ENCODE measurements at regions of chr17 and their contacts with region 1.

Region 1: GRCh38 chr17:78865682-78866390 is 25.2 kb upstream of the USP36 start:
- DNase-seq: peak; percentile 88
- ATAC-seq: peak; percentile 96
- H3K4me3 Mint-ChIP-seq: no peak overlapping the region
- H3K27ac Mint-ChIP-seq: no peak overlapping the region
- H3K4me1 Mint-ChIP-seq: no peaks in the 10 kb centered on the region
- H3K27me3 Mint-ChIP-seq: no peaks in the 10 kb centered on the region
- CTCF ChIP-seq: peak; percentile 89

Region 2: DNA sequence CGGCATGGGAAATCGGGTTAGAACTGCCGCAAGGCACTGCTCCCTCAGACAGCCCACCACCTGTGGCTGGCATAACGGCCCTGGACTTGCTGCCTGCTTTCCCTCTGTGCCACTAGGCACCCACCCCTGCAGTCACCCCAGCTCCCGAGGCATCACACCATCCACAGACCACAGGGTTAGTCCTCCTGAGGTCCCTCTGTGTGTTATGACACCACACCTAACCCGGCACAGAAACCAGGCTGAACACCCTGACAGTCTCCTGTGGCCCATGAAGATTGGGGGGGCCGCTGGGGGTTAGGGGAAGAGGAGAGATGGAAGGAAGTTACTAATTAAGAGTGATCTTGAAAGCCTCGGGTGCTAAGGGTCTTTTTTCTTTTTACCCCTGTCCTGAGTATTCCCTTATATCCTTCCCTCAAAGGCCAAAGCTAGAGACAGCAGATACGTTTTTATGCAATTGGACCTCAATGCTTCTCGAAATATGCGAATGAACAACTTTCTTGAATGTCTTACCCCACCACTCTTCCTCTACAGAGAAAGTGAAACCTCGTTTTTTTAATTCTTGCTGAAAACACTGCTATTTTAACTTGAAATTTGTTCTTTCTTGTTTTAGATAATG is 90.8 kb before region 1 on chr17:
- CTCF ChIA-PET with region 1: no interaction called
- POLR2A ChIA-PET with region 1: no interaction called
- DNase-seq: no peak
- ATAC-seq: peak; percentile 52; the same call in 1 of the 2 replicates
- H3K4me3 Mint-ChIP-seq: no peak overlapping the region
- H3K27ac Mint-ChIP-seq: peak overlapping the region; percentile 72
- H3K4me1 Mint-ChIP-seq: peaks cover 16% of the 10 kb centered on the region
- H3K27me3 Mint-ChIP-seq: no peaks in the 10 kb centered on the region; the same call in 1 of the 2 replicates
- CTCF ChIP-seq: no peak

Region 3: GRCh38 chr17:78818932-78819331 is 46.9 kb before region 1 on chr17:
- CTCF ChIA-PET with region 1: no interaction called
- POLR2A ChIA-PET with region 1: no interaction called
- DNase-seq: no peak
- ATAC-seq: no peak
- H3K4me3 Mint-ChIP-seq: no peak overlapping the region
- H3K27ac Mint-ChIP-seq: no peak overlapping the region
- H3K4me1 Mint-ChIP-seq: no peaks in the 10 kb centered on the region
- H3K27me3 Mint-ChIP-seq: no peaks in the 10 kb centered on the region
- CTCF ChIP-seq: no peak

Region 4: DNA sequence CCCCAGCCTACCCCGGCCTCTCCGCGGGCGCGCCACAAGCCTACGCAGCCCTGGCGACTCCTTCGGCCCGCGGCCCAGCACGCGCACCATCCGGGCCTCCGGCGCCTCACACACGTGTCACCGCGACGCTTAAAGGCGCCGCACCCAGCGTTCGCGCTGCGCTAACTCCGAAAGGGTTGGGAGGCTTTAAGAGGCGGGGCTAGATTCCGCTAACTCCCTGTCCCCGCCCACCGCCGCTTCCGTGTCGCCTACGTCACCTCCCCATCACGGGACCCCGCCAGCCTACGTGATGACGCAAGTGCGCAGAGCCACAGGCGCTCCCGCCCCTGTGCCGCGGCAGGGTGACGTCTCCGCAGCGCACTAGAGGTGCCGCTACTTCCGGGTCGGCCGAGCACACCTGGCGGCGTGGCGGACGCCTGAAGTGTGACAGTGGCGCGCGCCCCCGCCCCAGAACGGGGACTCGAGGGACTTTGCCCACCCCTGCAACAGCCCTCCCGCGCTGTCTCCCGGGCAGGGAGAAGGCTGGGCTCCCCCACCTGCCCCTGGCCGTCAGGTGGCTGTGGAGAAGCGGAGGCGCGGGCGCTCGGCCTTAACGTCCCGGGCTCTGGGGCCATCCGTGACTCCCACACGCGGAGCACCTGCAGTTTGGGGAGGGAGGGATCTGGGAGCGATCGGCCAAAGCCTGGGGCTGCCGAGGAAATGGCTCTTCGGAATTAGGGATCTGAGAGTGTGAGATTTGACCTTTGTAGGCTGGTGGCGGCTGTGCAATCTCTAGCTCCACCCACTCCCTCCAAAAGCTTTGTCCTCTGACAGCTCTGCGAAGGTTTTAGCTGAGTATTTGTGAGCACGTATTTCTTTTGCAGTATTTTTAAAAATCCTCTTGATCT is 24.9 kb before region 1 on chr17 and contains the start of gene USP36:
- CTCF ChIA-PET with region 1: interaction called, 13 read pairs
- POLR2A ChIA-PET with region 1: no interaction called
- DNase-seq: peak; percentile 99
- ATAC-seq: peak; percentile 90
- H3K4me3 Mint-ChIP-seq: peak within 1 kb of the TSS; percentile 84
- H3K27ac Mint-ChIP-seq: peak within 1 kb of the TSS; percentile 87
- H3K4me1 Mint-ChIP-seq: peaks cover 21% of the 10 kb centered on the region
- H3K27me3 Mint-ChIP-seq: no peaks in the 10 kb centered on the region
- CTCF ChIP-seq: no peak
- total RNA-seq, gene USP36: 62.0 to 74.0 TPM (median 65.8 TPM) in 3 replicates

Region 5: DNA sequence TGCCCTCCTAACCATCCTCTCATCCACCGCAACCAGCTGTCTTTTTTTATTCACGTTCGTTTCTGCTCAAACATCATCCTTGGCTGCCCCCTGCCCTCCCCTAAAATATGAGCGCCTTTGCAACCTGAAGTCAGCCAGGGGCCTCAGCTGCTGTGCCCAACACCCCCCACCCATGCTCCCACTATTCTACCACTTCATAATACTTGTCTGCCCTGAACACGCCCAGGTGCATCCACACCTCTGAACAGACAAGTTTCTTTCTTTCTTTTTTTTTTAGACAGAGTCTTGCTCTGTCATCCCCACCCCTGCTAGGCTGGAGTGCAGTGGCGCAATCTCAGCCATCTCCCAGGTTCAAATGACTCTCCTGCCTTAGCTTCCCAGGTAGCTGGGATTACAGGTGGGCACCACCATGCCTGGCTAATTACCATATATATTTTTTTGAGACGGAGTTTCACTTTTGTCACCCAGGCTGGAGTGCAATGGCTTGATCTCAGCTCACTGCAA is 10.3 kb after region 1 on chr17:
- CTCF ChIA-PET with region 1: interaction called, 13 read pairs
- POLR2A ChIA-PET with region 1: no interaction called
- DNase-seq: no peak
- ATAC-seq: no peak
- H3K4me3 Mint-ChIP-seq: no peak overlapping the region
- H3K27ac Mint-ChIP-seq: peak overlapping the region; percentile 38; the same call in 1 of the 2 replicates
- H3K4me1 Mint-ChIP-seq: peaks cover 13% of the 10 kb centered on the region
- H3K27me3 Mint-ChIP-seq: no peaks in the 10 kb centered on the region
- CTCF ChIP-seq: no peak

Region 6: GRCh38 chr17:78903101-78903779 is 37.4 kb after region 1 on chr17 and contains the start of gene CEP295NL:
- CTCF ChIA-PET with region 1: interaction called, 15 read pairs
- POLR2A ChIA-PET with region 1: no interaction called
- DNase-seq: no peak
- ATAC-seq: no peak
- H3K4me3 Mint-ChIP-seq: no peak within 1 kb of the TSS
- H3K27ac Mint-ChIP-seq: peak within 1 kb of the TSS; percentile 27
- H3K4me1 Mint-ChIP-seq: peaks cover 24% of the 10 kb centered on the region
- H3K27me3 Mint-ChIP-seq: no peaks in the 10 kb centered on the region
- CTCF ChIP-seq: no peak
- total RNA-seq, gene CEP295NL: 0.61 to 0.89 TPM (median 0.89 TPM) in 3 replicates

Region 7: GRCh38 chr17:78923660-78924453 is 58.0 kb after region 1 on chr17:
- CTCF ChIA-PET with region 1: interaction called, 11 read pairs
- POLR2A ChIA-PET with region 1: no interaction called
- DNase-seq: peak; percentile 82
- ATAC-seq: peak; percentile 60
- H3K4me3 Mint-ChIP-seq: peak overlapping the region; percentile 73
- H3K27ac Mint-ChIP-seq: no peak overlapping the region
- H3K4me1 Mint-ChIP-seq: peaks cover 28% of the 10 kb centered on the region
- H3K27me3 Mint-ChIP-seq: peaks cover 3% of the 10 kb centered on the region; the same call in 1 of the 2 replicates
- CTCF ChIP-seq: no peak

Region 8: DNA sequence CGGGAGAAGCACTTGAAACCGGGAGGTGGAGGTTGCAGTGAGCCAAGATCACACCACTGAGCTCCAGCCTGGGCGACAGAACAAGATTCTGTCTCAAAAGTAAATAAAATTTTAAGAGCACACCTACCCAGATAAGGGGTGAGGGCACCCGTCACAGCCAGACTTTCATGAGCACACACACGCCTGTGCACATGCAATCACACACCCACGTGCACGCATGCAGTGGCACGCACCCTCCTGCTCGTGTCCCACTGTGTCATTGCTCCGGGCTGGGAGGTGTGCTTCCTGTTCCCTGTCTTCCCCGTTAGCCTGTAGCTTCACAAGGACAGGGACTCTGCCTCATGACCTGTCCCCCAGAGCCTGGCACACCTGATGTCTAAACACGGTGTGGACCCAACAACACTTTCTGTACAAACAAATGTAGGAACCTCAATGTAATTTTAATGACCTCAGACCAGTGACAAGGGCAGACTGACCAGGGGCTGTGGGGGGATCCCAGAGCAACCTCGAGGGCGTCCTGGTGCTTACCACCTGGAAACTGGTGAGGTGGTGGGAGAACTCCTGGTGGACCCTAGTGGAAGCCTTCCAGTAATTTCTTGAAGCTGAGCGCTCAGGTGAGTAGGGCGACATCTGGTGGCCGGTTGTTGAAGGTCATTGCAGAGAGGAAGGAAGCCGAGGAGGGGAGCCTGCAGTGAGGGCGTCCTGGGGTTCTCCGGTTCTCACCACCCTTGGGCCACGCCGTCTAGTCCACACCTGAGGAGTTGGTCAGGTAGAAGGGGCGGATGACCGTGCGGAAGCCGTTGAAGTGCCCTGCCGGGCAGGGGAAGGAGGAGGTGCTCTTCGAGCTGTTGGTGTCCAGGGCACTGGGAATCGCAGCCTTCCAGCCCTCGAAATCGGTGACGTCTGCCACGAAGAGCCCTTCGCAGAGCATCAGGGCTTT is 105.3 kb after region 1 on chr17:
- CTCF ChIA-PET with region 1: interaction called, 95 read pairs
- POLR2A ChIA-PET with region 1: interaction called, 6 read pairs
- DNase-seq: peak; percentile 87
- ATAC-seq: peak; percentile 48
- H3K4me3 Mint-ChIP-seq: no peak overlapping the region
- H3K27ac Mint-ChIP-seq: peak overlapping the region; percentile 75
- H3K4me1 Mint-ChIP-seq: peaks cover 24% of the 10 kb centered on the region
- H3K27me3 Mint-ChIP-seq: no peaks in the 10 kb centered on the region; the same call in 1 of the 2 replicates
- CTCF ChIP-seq: peak; percentile 75